Activated naive CD4-positive, alpha-beta T cell treated with anti-CD3 and anti-CD28 coated beads, Interleukin-2, amount 10 ng/mL, durations not matched to agents 7 days and 5 days (primary cell): ENCODE measurements at regions of chr10 and their contacts with region 1.

Region 1: DNA sequence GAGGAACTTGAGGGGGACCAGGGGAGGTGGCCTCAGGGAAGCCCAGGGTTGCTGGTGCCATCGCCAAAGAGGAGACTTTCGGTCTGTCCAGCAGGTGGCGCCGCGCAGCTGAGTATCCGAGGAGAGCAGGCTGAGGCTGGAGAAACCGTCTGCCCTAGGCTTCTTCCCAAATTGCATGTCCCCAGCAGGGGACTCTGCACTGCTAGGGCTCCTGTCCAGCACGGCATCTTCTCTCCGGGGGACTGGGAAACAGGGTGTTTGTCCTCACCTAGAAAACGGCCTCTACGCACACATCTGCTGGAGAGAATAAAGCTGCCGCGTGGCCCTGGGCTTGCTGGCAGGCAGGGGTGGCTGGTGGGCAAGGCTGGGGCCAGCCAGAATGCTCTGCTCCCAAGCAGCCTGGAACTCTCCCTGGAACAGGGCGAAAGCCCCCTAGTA is 161.9 kb downstream of the SH2D4B start:
- DNase-seq: peak; percentile 80
- H3K4me3 Mint-ChIP-seq: no peak overlapping the region
- H3K27ac Mint-ChIP-seq: no peak overlapping the region
- H3K4me1 Mint-ChIP-seq: no peaks in the 10 kb centered on the region
- H3K27me3 Mint-ChIP-seq: peaks cover 12% of the 10 kb centered on the region

Region 2: GRCh38 chr10:80924063-80924952 is 224.7 kb after region 1 on chr10:
- CTCF ChIA-PET with region 1: interaction called, 27 read pairs
- DNase-seq: peak; percentile 46
- H3K4me3 Mint-ChIP-seq: no peak overlapping the region
- H3K27ac Mint-ChIP-seq: no peak overlapping the region
- H3K4me1 Mint-ChIP-seq: no peaks in the 10 kb centered on the region
- H3K27me3 Mint-ChIP-seq: peaks cover 5% of the 10 kb centered on the region

Region 3: DNA sequence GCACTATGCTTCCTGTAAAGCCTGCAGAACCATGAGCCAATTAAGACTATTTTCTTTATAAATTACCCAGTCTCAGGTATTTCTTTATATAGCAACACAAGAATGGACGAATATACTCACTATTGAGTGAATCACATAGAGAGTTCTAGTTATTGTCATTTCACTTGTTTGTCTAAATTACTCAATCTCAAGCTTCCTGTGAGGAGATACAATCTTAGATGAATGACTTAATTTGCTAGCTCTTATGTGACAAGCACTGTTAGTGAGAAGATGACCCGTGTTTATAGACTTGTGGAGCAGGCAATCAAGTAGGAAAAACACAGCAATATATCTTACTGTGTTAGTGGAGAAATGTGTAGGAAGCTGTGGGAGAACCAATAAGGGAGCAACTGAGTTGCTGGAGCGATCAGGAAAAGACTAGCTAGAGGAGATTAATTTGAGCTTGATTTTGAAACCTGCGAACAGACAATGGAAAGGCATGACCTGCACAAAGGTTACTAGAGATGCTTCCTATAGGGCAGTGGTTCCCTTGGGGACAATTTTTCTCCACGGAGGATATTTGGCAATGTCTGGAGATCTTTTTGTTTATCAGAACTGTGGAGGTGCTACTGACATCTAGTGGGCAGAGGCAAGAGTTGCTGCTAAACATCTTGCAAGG is 319.2 kb after region 1 on chr10:
- CTCF ChIA-PET with region 1: interaction called, 10 read pairs
- DNase-seq: peak; percentile 27
- H3K4me3 Mint-ChIP-seq: no peak overlapping the region
- H3K27ac Mint-ChIP-seq: no peak overlapping the region
- H3K4me1 Mint-ChIP-seq: no peaks in the 10 kb centered on the region
- H3K27me3 Mint-ChIP-seq: peaks cover under 1% of the 10 kb centered on the region

Region 4: DNA sequence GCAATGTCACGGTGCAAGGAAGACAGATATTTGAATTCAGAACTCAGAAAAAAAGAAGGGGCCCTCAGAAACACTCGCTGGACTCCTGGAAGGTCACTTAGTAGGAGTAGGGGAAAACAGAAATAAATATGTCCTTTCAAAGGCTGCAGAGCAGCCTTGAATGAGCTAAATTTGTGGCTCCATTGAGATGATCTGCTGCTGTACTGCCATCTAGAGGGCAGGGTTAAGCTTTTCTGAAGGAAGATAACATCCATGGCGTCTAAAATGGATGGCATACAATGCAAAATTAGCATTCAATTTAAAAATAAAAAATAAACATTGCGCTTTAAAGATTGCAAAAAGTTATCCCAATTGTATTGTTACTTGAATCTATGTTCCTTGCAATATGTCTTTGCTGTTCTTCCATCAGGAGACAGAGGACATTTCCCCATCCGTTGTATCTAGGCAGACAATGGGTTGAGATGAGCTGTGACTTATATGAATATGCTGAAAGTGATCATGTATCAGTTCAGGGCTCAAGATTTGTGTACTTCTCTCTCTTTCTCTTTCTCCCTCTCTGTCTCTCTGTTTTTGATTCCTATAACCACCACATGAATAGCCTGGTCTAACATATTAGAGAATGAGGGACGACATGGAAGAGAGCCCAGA is 480.3 kb after region 1 on chr10:
- CTCF ChIA-PET with region 1: interaction called, 12 read pairs
- DNase-seq: no peak
- H3K4me3 Mint-ChIP-seq: no peak overlapping the region
- H3K27ac Mint-ChIP-seq: no peak overlapping the region
- H3K4me1 Mint-ChIP-seq: no peaks in the 10 kb centered on the region
- H3K27me3 Mint-ChIP-seq: no peaks in the 10 kb centered on the region